CD14-positive monocyte (primary cell): ENCODE measurements at regions of chr12 and their contacts with region 1.

Region 1: GRCh38 chr12:108861878-108862587 is 4.7 kb upstream of the SSH1 start:
- DNase-seq: peak; percentile 89 to 95 (median 93)
- H3K4me3 ChIP-seq: peak overlapping the region in 1 of 3 experiments; percentile 27
- H3K4me3 Mint-ChIP-seq: peak overlapping the region in 1 of 2 donors; percentile 55
- H3K27ac ChIP-seq: peak overlapping the region; percentile 76 to 93
- H3K27ac Mint-ChIP-seq: peak overlapping the region; percentile 91 to 97 (median 96)
- H3K4me1 ChIP-seq: peaks cover 54 to 65% of the 10 kb centered on the region in 2 donors
- H3K4me1 Mint-ChIP-seq: peaks cover 56% of the 10 kb centered on the region
- H3K27me3 ChIP-seq: no peaks in the 10 kb centered on the region
- H3K27me3 Mint-ChIP-seq: no peaks in the 10 kb centered on the region
- CTCF ChIP-seq: no peak

Region 2: GRCh38 chr12:108907476-108908351 is 45.7 kb after region 1 on chr12:
- intact Hi-C with region 1: loop called in 1 of 2 experiments (anchors 5 kb)
- DNase-seq: peak; percentile 37 to 64 (median 56)
- H3K4me3 ChIP-seq: peak overlapping the region in 1 of 3 experiments; percentile 51
- H3K4me3 Mint-ChIP-seq: peak overlapping the region in 1 of 2 donors; percentile 11
- H3K27ac ChIP-seq: peak overlapping the region; percentile 8 to 98
- H3K27ac Mint-ChIP-seq: peak overlapping the region; percentile 80 to 99 (median 98)
- H3K4me1 ChIP-seq: peaks cover 62 to 63% of the 10 kb centered on the region in 2 donors
- H3K4me1 Mint-ChIP-seq: peaks cover 62% of the 10 kb centered on the region
- H3K27me3 ChIP-seq: no peaks in the 10 kb centered on the region
- H3K27me3 Mint-ChIP-seq: peaks cover 0 to 4% (median 0%) of the 10 kb centered on the region in 3 donors
- CTCF ChIP-seq: no peak

Region 3: GRCh38 chr12:109018296-109018695 is 156.3 kb after region 1 on chr12:
- intact Hi-C with region 1: no loop called
- DNase-seq: no peak
- H3K4me3 ChIP-seq: no peak overlapping the region
- H3K4me3 Mint-ChIP-seq: no peak overlapping the region
- H3K27ac ChIP-seq: no peak overlapping the region
- H3K27ac Mint-ChIP-seq: no peak overlapping the region
- H3K4me1 ChIP-seq: no peaks in the 10 kb centered on the region
- H3K4me1 Mint-ChIP-seq: no peaks in the 10 kb centered on the region
- H3K27me3 ChIP-seq: peaks cover 0 to 11% of the 10 kb centered on the region in 2 donors
- H3K27me3 Mint-ChIP-seq: peaks cover 9 to 16% (median 11%) of the 10 kb centered on the region in 3 donors
- CTCF ChIP-seq: no peak

Region 4: GRCh38 chr12:109153821-109154441 is 291.9 kb after region 1 on chr12:
- intact Hi-C with region 1: no loop called
- DNase-seq: peak in 1 of 3 donors; percentile 52
- H3K4me3 ChIP-seq: peak overlapping the region; percentile 1 to 89 (median 6)
- H3K4me3 Mint-ChIP-seq: peak overlapping the region; percentile 87 to 94
- H3K27ac ChIP-seq: no peak overlapping the region
- H3K27ac Mint-ChIP-seq: peak overlapping the region in 4 of 7 donors; percentile 28 to 74 (median 56)
- H3K4me1 ChIP-seq: peaks cover 17 to 19% of the 10 kb centered on the region in 2 donors
- H3K4me1 Mint-ChIP-seq: peaks cover 27% of the 10 kb centered on the region
- H3K27me3 ChIP-seq: peaks cover 0 to 4% of the 10 kb centered on the region in 2 donors
- H3K27me3 Mint-ChIP-seq: peaks cover 6 to 15% (median 7%) of the 10 kb centered on the region in 3 donors
- CTCF ChIP-seq: no peak